CD8-positive, alpha-beta memory T cell (primary cell): ENCODE measurements at regions of chr19 and their contacts with region 1.

Region 1: DNA sequence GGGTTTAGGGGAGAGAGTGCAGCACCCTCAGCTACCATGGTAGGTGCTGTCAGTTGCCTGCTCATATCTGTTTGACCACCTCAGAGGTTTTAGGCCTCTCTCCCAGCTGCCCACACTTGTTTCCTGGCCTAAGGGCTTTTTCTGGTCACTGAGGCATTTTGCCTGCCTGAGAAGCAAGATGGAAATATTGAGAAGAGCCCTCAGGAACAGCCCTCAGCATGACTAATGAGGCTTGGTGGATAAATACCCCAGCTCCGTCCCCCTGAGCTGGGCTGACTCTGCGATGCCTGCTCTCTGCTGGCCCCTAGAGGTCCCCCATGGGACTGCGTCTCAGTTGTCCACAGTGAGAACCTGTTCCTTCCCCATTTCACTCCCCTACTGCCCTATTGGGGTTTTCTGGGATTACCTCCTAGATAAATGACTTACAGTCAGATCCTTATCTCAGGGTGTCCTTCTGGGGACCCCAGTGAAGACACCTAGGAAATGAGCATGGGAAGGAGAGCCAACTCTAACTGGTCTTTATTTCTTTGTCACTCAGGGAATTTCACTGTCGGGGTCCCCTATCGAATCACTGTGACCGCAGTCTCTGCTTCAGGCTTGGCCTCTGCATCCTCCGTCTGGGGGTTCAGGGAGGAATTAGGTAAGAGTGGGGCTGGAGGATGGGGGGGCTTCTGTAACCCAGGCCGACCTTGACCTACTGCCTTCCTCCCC is 13.3 kb downstream of the PALM3 start:
- DNase-seq: peak; percentile 51 to 82 (median 66)
- H3K4me3 ChIP-seq: no peak overlapping the region
- H3K4me3 Mint-ChIP-seq: no peak overlapping the region
- H3K27ac ChIP-seq: no peak overlapping the region
- H3K27ac Mint-ChIP-seq: peak overlapping the region; percentile 13 to 87 (median 76)
- H3K4me1 ChIP-seq: no peaks in the 10 kb centered on the region
- H3K4me1 Mint-ChIP-seq: peaks cover 0 to 9% (median 1%) of the 10 kb centered on the region in 3 donors
- H3K27me3 ChIP-seq: no peaks in the 10 kb centered on the region
- H3K27me3 Mint-ChIP-seq: no peaks in the 10 kb centered on the region

Region 2: DNA sequence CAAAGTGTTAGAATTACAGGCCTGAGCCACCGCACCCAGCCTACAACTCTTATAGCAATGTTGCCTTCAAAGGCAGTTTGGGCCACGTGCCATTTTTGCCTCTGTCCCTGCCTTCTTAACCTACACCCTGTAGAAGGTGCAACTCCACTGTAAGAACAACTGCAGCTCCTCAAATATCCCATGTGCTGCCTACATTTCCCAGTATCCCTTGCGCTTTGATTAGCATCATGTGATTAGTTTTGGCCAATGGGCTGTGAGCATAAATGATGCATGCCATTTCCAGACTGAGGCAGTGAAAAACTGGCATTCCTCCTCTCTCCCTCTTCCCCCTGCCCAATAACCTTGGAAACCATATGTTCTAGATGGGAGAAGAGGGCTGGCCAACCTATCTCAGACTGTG is 359.5 kb before region 1 on chr19:
- CTCF ChIA-PET with region 1: no interaction called
- POLR2A ChIA-PET with region 1: no interaction called
- DNase-seq: no peak
- H3K4me3 ChIP-seq: no peak overlapping the region
- H3K4me3 Mint-ChIP-seq: no peak overlapping the region
- H3K27ac ChIP-seq: no peak overlapping the region
- H3K27ac Mint-ChIP-seq: no peak overlapping the region
- H3K4me1 ChIP-seq: no peaks in the 10 kb centered on the region
- H3K4me1 Mint-ChIP-seq: peaks cover 2 to 4% (median 2%) of the 10 kb centered on the region in 3 donors
- H3K27me3 ChIP-seq: no peaks in the 10 kb centered on the region
- H3K27me3 Mint-ChIP-seq: peaks cover 7 to 31% of the 10 kb centered on the region in 2 donors

Region 3: GRCh38 chr19:13880059-13881043 is 168.2 kb before region 1 on chr19:
- CTCF ChIA-PET with region 1: interaction called, 22 read pairs
- POLR2A ChIA-PET with region 1: no interaction called
- DNase-seq: peak; percentile 93 to 99 (median 98)
- H3K4me3 ChIP-seq: peak overlapping the region; percentile 52
- H3K4me3 Mint-ChIP-seq: peak overlapping the region; percentile 54 to 83 (median 72)
- H3K27ac ChIP-seq: peak overlapping the region; percentile 74
- H3K27ac Mint-ChIP-seq: peak overlapping the region in 7 of 8 donors; percentile 88 to 92 (median 91)
- H3K4me1 ChIP-seq: peaks cover 48% of the 10 kb centered on the region
- H3K4me1 Mint-ChIP-seq: peaks cover 33 to 49% (median 37%) of the 10 kb centered on the region in 3 donors
- H3K27me3 ChIP-seq: no peaks in the 10 kb centered on the region
- H3K27me3 Mint-ChIP-seq: no peaks in the 10 kb centered on the region

Region 4: DNA sequence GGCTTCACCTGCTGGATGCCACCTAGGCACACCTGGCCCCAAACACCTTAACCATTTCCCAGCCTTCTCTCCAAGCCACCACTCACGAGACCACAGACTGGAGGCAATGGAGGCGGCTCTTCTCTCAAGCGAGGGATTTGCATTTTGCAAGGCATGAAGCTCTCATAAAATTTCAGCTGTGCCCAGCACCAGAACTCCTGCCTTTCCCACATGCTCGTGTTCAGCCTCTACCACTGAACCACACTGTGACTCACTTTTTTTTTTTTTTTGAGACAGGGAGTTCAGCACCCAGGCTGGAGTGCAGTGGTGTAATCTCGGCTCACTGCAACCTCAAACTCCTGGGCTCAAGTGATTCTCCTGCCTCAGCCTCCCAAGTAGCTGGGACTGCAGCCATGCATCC is 161.1 kb before region 1 on chr19:
- CTCF ChIA-PET with region 1: interaction called, 15 read pairs
- POLR2A ChIA-PET with region 1: no interaction called
- DNase-seq: peak in 1 of 5 donors; percentile 32
- H3K4me3 ChIP-seq: no peak overlapping the region
- H3K4me3 Mint-ChIP-seq: peak overlapping the region; percentile 21 to 78 (median 70)
- H3K27ac ChIP-seq: no peak overlapping the region
- H3K27ac Mint-ChIP-seq: peak overlapping the region; percentile 84 to 95 (median 92)
- H3K4me1 ChIP-seq: peaks cover 46% of the 10 kb centered on the region
- H3K4me1 Mint-ChIP-seq: peaks cover 24 to 50% (median 33%) of the 10 kb centered on the region in 3 donors
- H3K27me3 ChIP-seq: no peaks in the 10 kb centered on the region
- H3K27me3 Mint-ChIP-seq: no peaks in the 10 kb centered on the region

Region 5: DNA sequence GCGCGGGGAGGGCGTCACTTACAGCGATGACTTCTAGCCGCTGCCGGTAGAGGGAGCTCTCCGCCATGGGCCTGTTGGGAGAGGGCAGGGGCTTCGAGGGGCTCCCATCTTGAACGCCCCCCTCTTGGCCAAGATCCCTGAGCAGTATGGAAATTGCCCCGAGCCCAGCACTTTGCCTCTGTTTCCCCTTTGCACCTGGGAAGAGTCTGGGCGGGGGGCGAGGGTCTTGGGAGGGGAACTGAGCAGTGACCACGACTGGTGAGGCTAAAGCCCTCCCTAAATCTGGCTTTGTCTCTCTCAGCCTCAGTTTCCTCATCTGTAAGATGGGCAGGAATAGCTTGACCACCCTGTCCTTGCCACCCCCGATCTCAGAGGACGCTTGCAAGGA is 10.5 kb after region 1 on chr19:
- CTCF ChIA-PET with region 1: interaction called, 35 read pairs
- POLR2A ChIA-PET with region 1: interaction called, 4 read pairs
- DNase-seq: peak; percentile 33 to 62 (median 43)
- H3K4me3 ChIP-seq: no peak overlapping the region
- H3K4me3 Mint-ChIP-seq: peak overlapping the region in 6 of 7 donors; percentile 31 to 78 (median 60)
- H3K27ac ChIP-seq: no peak overlapping the region
- H3K27ac Mint-ChIP-seq: peak overlapping the region in 2 of 8 donors; percentile 21 to 42
- H3K4me1 ChIP-seq: peaks cover 17% of the 10 kb centered on the region
- H3K4me1 Mint-ChIP-seq: peaks cover 11 to 25% (median 11%) of the 10 kb centered on the region in 3 donors
- H3K27me3 ChIP-seq: peaks cover 16% of the 10 kb centered on the region
- H3K27me3 Mint-ChIP-seq: peaks cover 18 to 36% of the 10 kb centered on the region in 2 donors

Region 6: DNA sequence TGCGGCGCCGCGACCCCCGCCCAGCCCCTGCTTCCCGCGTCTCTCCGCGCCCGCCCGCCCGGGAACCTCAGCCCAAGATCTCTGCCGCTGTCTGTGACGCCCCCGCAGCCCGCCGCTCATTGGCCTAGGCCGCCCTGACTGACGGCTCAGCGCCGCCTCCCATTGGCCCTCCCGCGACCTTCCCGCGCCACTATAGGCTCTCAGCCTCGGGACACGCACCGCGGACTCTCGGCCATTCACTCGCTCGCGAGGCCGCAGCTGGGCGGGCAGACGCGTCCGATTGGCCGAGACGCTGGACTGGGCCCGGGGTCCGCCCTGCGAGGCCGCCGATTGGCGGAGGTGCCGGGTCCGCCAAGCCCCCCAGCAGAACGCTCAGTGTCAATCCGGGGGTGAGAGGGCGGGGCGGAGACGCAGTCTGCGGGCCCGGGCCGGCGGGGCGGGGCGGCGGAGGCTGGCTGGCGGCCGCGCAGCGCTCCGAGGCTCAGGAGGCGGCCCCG is 69.1 kb after region 1 on chr19 and contains the start of gene PRKACA:
- CTCF ChIA-PET with region 1: no interaction called
- POLR2A ChIA-PET with region 1: interaction called, 12 read pairs
- DNase-seq: peak; percentile 97 to 99 (median 99)
- H3K4me3 ChIP-seq: peak within 1 kb of the TSS; percentile 60
- H3K4me3 Mint-ChIP-seq: peak within 1 kb of the TSS; percentile 92 to 98 (median 96)
- H3K27ac ChIP-seq: peak within 1 kb of the TSS; percentile 85
- H3K27ac Mint-ChIP-seq: peak within 1 kb of the TSS; percentile 96 to 100 (median 99)
- H3K4me1 ChIP-seq: peaks cover 34% of the 10 kb centered on the region
- H3K4me1 Mint-ChIP-seq: peaks cover 35 to 52% (median 35%) of the 10 kb centered on the region in 3 donors
- H3K27me3 ChIP-seq: no peaks in the 10 kb centered on the region
- H3K27me3 Mint-ChIP-seq: peaks cover 0 to 4% of the 10 kb centered on the region in 2 donors
- total RNA-seq, gene PRKACA: 77.3 to 81.0 TPM